Ovary (tissue), 10 donors: ENCODE measurements at regions of chr12 and their contacts with region 1.

Region 1: GRCh38 chr12:4164559-4165558 is 108.7 kb upstream of the CCND2 start:
- DNase-seq: peak in 2 of 5 donors; percentile 22 to 39
- H3K4me3 ChIP-seq: peak overlapping the region; percentile 35
- H3K27ac ChIP-seq: no peak overlapping the region
- H3K4me1 ChIP-seq: no peaks in the 10 kb centered on the region
- H3K27me3 ChIP-seq: no peaks in the 10 kb centered on the region
- CTCF ChIP-seq: no peak
- EP300 ChIP-seq: no peak
- POLR2A ChIP-seq: no peak

Region 2: GRCh38 chr12:4089121-4089606 is 75.7 kb before region 1 on chr12:
- intact Hi-C with region 1: no loop called
- DNase-seq: no peak
- H3K4me3 ChIP-seq: no peak overlapping the region
- H3K27ac ChIP-seq: no peak overlapping the region
- H3K4me1 ChIP-seq: no peaks in the 10 kb centered on the region
- H3K27me3 ChIP-seq: no peaks in the 10 kb centered on the region
- CTCF ChIP-seq: no peak
- EP300 ChIP-seq: no peak
- POLR2A ChIP-seq: no peak

Region 3: GRCh38 chr12:4135919-4136605 is 28.8 kb before region 1 on chr12:
- intact Hi-C with region 1: loop called in 1 of 4 experiments (anchors 2 kb)
- DNase-seq: no peak
- H3K4me3 ChIP-seq: no peak overlapping the region
- H3K27ac ChIP-seq: no peak overlapping the region
- H3K4me1 ChIP-seq: peaks cover 3% of the 10 kb centered on the region
- H3K27me3 ChIP-seq: no peaks in the 10 kb centered on the region
- CTCF ChIP-seq: no peak
- EP300 ChIP-seq: no peak
- POLR2A ChIP-seq: no peak

Region 4: GRCh38 chr12:4196805-4197420 is 32.1 kb after region 1 on chr12:
- intact Hi-C with region 1: loop called in 1 of 4 experiments (anchors 1 kb)
- DNase-seq: no peak
- H3K4me3 ChIP-seq: no peak overlapping the region
- H3K27ac ChIP-seq: no peak overlapping the region
- H3K4me1 ChIP-seq: no peaks in the 10 kb centered on the region
- H3K27me3 ChIP-seq: no peaks in the 10 kb centered on the region
- CTCF ChIP-seq: no peak
- EP300 ChIP-seq: no peak
- POLR2A ChIP-seq: no peak

Region 5: DNA sequence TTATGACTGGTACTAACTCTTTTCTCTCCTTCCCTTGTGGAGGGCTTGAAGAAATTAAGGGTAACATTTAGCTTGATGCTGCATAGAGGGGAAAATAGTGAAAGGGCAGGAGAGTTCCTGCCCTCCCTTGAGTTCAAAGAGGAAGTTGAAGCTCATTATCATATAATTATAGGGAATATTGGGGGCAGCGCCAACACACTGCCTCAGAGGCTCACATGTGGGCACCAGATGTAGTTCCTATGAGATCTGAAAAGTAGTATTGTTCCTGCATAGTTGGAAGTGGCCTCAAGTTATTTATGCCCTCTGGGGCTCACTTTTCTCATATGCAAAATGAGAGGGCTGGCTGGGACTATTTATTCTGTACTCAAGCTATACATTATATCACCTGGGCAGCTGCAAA is 247.6 kb after region 1 on chr12:
- intact Hi-C with region 1: no loop called
- DNase-seq: no peak
- H3K4me3 ChIP-seq: no peak overlapping the region
- H3K27ac ChIP-seq: no peak overlapping the region
- H3K4me1 ChIP-seq: no peaks in the 10 kb centered on the region
- H3K27me3 ChIP-seq: no peaks in the 10 kb centered on the region
- CTCF ChIP-seq: no peak
- EP300 ChIP-seq: no peak
- POLR2A ChIP-seq: no peak